ENCODE measurements at regions of chr13 and their contacts with region 1.

Region 1: DNA sequence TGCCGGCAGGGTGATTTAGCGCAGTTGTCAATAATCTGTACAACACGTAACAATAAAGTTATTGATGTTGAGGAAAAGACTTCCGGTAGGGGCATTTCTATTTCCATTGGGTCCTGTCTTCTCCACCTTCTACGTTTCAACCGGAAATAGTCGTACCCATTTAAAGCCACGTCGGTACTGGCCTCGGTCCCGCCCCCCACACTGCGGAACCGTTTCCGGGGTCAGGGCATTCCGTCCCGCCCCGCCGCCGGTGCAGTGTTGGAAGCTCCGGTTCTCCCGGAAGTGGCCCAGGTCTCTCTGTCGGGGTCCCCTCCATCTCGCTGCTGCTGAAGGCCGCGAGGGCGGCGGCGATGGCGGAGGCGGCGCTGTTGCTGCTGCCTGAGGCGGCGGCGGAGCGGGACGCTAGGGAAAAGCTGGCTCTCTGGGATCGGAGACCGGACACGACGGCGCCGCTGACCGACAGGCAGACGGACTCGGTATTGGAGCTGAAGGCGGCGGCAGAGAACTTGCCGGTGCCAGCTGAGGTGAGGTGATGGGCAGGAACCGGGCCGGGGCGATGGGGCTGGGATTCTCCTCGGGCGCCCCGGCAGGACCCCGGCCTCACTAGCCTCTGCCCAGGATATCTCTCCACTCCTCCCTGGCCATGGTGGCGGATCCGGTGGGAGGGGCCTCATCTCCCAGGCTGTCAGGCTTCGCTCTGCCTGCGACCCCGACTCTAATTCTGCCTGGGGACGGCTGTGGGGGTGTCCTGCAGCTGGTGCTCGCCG is at the start of gene COG3:
- DNase-seq: peak; percentile 94 to 95
- ATAC-seq: peak; percentile 98 to 100 (median 99)
- H3K4me3 ChIP-seq: peak within 1 kb of the TSS; percentile 75 to 97 (median 85)
- H3K27ac ChIP-seq: peak within 1 kb of the TSS; percentile 70 to 97 (median 94)
- H3K4me1 ChIP-seq: peaks cover 6 to 52% (median 41%) of the 10 kb centered on the region in 9 donors
- H3K27me3 ChIP-seq: no peaks in the 10 kb centered on the region
- CTCF ChIP-seq: peak in 5 of 9 donors; percentile 17 to 62 (median 26)
- total RNA-seq, gene COG3: 12.3 to 18.0 (median 15.8) TPM

Region 2: GRCh38 chr13:45340926-45341750 is 123.7 kb before region 1 on chr13 and contains the start of gene TPT1:
- intact Hi-C with region 1: loop called in 1 of 10 experiments (anchors 10 kb)
- DNase-seq: peak; percentile 99
- ATAC-seq: peak; percentile 91 to 97 (median 94)
- H3K4me3 ChIP-seq: peak within 1 kb of the TSS; percentile 75 to 99 (median 95)
- H3K27ac ChIP-seq: peak within 1 kb of the TSS; percentile 100
- H3K4me1 ChIP-seq: peaks cover 16 to 52% (median 49%) of the 10 kb centered on the region in 9 donors
- H3K27me3 ChIP-seq: no peaks in the 10 kb centered on the region
- CTCF ChIP-seq: no peak
- total RNA-seq, gene TPT1: 3,297 to 4,965 (median 3,717) TPM

Region 3: DNA sequence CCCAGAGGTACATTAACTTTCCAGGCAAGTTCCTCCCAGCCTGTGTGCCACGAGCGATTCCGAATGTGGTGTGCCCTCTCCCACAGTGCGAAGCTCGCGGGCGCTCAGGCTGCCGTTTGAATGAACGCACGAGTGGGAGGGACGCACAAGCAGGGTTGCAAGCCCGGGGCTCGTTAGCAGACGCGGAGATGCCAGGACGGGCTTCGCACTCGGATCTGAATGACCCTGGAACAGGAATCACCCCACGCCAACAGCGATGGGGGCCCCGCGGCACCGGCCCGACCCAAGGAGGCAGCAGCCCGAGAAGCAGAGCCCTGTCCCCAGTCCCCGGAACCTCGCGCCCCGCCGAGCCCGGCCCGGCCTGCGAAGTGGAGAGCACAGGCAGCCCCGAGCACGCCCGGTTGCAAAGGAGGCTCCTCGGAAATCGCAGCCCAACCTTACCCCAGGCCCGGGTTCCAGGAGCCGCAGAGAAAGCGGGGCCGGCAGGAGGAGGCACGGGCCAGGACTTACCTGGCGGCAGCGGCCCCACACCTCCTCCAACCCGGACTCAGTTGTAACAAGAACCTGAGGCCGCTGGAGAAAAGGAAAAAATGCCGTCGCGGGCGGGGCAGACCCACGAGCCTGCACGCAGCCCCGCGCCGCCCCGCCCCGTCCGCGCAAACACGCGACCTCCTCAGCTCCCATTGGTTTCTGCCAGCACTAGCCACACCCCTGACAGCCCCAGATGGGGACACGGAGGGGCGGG is 46.9 kb before region 1 on chr13 and contains the start of gene SLC25A30:
- intact Hi-C with region 1: loop called in 6 of 10 experiments (anchors 2 to 10 kb)
- DNase-seq: peak; percentile 96
- ATAC-seq: peak; percentile 98 to 99 (median 98)
- H3K4me3 ChIP-seq: peak within 1 kb of the TSS; percentile 52 to 89 (median 77)
- H3K27ac ChIP-seq: peak within 1 kb of the TSS; percentile 51 to 93 (median 90)
- H3K4me1 ChIP-seq: peaks cover 10 to 44% (median 36%) of the 10 kb centered on the region in 9 donors
- H3K27me3 ChIP-seq: no peaks in the 10 kb centered on the region
- CTCF ChIP-seq: peak in 2 of 9 donors; percentile 3 to 34
- total RNA-seq, gene SLC25A30: 83.9 to 280 (median 159) TPM